Colonic mucosa (tissue), 4 donors: ENCODE measurements at regions of chr19 and their contacts with region 1.

Region 1: DNA sequence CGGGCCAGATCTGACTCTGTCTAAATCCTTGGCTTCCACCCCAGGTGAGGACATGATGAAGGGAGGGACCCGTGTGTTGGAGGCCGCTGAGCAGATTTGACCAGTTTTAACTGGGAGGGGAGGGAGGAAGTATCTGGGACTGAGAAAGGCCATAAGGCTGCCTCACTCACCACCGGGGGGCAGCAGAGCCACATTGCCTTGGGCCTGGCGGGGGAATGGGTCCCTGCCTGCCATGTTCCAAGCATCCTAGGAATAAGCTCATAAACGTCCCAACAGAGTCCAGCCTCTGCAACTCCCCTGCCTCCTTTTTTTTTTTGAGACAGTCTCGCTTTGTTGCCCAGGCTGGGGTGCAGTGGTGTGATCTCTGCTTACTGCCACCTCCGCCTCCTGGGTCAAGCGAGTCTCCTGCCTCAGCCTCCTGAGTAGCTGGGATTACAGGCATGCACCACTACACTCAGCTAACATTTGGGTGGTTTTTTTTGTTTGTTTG is 15.5 kb downstream of the MAST3 start:
- DNase-seq: peak; percentile 96
- H3K4me3 ChIP-seq: no peak overlapping the region
- H3K27ac ChIP-seq: no peak overlapping the region
- H3K4me1 ChIP-seq: peaks cover 10% of the 10 kb centered on the region
- H3K27me3 ChIP-seq: no peaks in the 10 kb centered on the region
- CTCF ChIP-seq: peak; percentile 87

Region 2: DNA sequence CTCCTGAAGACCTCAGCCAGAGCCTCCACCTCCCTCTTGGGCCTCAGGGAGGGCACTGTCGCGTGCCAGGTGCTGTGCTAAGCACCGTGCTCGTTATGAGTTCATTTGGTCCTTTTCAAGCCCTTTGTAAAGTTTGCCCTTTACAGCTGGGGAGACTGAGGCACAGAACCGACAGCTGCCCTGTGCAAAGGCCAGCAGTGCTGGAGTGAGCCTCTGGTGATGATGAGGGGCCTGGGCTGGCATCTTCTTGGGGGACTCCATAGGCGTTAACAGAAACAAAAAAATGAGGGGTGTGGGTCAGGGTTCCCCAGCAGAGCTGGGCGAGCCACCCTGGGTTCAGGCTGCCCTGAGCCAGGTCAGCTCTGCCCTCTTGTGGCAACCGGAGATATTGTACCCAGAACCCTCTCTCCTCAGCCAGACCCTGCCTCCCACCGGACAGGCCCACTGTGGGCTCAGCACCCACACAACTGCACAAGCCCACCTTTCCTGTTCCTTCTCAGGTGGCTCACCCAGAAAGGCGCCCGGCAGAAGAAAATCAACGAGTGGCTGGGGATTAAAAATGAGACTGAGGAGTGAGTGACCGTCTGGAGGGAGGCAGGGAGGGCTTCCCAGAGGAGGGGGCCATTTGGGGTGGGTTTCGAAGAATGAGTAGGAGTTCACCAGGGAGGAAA is 55.1 kb after region 1 on chr19:
- intact Hi-C with region 1: loop called (anchors 5 kb)
- DNase-seq: no peak
- H3K4me3 ChIP-seq: no peak overlapping the region
- H3K27ac ChIP-seq: no peak overlapping the region
- H3K4me1 ChIP-seq: no peaks in the 10 kb centered on the region
- H3K27me3 ChIP-seq: no peaks in the 10 kb centered on the region
- CTCF ChIP-seq: peak; percentile 74